Sigmoid colon (tissue), 7 donors: ENCODE measurements at regions of chr12 and their contacts with region 1.

Region 1: DNA sequence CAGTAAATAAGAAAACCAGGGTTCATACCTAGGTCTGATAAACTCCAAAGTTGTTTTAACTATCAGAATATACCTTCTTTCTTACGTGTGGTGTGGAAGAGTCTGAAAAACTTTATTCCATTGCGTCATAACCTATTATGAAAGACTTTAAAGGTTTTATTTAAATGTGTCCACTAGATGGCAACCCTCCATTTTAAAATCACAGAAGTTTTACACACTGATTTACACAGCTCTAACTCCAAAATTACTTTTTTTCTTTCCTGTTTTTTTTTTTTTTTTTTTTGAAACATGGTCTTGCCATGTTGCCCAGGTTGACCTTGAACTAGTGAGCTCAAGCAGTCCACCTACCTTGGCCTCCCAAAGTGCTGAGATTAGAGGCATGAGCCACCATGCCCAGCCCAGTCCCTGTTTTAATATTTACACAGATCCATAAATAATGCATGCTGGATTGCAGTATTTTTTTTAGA is 17.3 kb upstream of the TMPRSS12 start:
- DNase-seq: no peak
- H3K4me3 ChIP-seq: no peak overlapping the region
- H3K27ac ChIP-seq: peak overlapping the region; percentile 50 to 71 (median 66)
- H3K4me1 ChIP-seq: peaks cover 0 to 14% (median 9%) of the 10 kb centered on the region in 4 donors
- H3K27me3 ChIP-seq: no peaks in the 10 kb centered on the region
- CTCF ChIP-seq: peak; percentile 38 to 64 (median 49)
- EP300 ChIP-seq: no peak
- POLR2A ChIP-seq: no peak

Region 2: GRCh38 chr12:50763639-50764285 is 61.6 kb before region 1 on chr12 and contains the start of gene ATF1:
- intact Hi-C with region 1: loop called (anchors 5 kb)
- DNase-seq: peak; percentile 96
- H3K4me3 ChIP-seq: peak within 1 kb of the TSS; percentile 95 to 99 (median 99)
- H3K27ac ChIP-seq: peak within 1 kb of the TSS; percentile 96 to 100 (median 99)
- H3K4me1 ChIP-seq: peaks cover 0 to 38% (median 33%) of the 10 kb centered on the region in 4 donors
- H3K27me3 ChIP-seq: no peaks in the 10 kb centered on the region
- CTCF ChIP-seq: no peak
- EP300 ChIP-seq: no peak
- POLR2A ChIP-seq: peak; percentile 68 to 71
- total RNA-seq, gene ATF1: 12.6 to 27.6 (median 20.8) TPM

Region 3: DNA sequence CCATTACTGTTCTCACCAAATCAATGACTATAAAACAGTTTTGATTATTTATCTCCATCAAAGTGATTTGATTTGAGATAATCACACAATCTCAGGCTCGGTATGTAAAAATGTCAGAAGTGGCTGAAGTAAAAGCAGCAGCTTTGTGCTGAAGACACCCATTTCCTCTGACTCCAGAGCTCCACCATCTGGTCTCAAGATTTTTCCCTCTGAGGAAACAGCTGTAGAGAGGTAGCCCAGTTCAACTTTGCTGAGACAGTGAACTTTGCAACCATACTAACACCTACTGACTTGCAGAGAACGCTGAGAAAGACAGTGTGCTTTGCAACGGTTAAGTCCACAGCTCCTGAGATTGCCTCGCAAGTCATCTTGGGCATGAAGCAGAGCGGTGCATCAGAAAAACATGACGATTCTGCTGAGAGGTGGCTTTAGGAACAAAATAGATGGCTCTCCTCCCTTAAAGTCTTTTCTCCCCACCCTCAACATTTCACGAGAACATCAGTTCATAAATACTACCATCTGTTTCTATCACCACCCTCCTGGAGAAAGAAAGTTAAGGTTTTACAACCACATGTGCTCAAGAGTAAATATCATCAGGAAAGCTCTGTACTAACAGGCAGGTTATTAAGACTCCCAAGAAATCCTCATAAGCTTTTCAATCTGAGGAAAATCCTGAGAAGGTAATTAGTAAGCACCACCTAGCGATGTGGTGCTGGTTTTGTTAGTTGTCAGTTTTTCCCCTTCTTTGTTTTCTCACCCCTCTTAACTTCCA is 161.7 kb after region 1 on chr12:
- intact Hi-C with region 1: loop called (anchors 1 kb)
- DNase-seq: peak; percentile 71
- H3K4me3 ChIP-seq: no peak overlapping the region
- H3K27ac ChIP-seq: peak overlapping the region; percentile 59 to 83 (median 76)
- H3K4me1 ChIP-seq: peaks cover 0 to 33% (median 27%) of the 10 kb centered on the region in 4 donors
- H3K27me3 ChIP-seq: no peaks in the 10 kb centered on the region
- CTCF ChIP-seq: peak; percentile 28 to 64 (median 54)
- EP300 ChIP-seq: no peak
- POLR2A ChIP-seq: no peak